ENCODE measurements at regions of chr1 and their contacts with region 1.

Region 1: DNA sequence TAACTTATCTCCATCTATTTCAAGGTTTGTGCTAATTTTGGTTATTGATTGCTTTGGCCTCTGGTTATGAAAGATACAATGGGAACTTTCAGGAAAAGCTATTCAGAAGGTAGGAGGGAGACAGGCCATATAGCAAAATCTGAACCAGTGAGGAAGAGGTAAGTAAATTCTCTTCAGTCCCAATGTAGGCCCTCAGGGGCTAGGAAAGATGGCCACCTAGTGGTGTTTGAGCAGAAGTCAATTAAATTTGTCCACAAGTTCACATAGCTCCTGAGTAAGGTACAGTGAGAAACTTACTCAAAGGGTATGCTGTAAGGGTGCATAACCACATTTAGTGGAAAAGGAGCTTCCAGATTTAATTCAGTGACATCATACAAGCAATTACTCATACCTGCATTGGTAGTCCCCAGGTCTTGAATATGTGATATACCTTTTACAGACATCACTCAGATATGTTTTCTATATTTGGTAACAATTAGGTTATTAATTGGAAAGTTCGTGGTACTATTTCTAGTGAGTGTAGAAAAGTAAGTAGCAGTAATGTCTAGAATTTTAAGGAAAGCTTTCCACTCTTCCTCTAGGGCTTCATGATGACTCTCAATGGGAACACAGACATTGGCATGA is 21.4 kb upstream of the FMO1 start:
- DNase-seq: peak; percentile 60
- H3K4me3 ChIP-seq: no peak overlapping the region
- H3K27ac ChIP-seq: no peak overlapping the region
- H3K4me1 ChIP-seq: no peaks in the 10 kb centered on the region
- H3K27me3 ChIP-seq: no peaks in the 10 kb centered on the region
- CTCF ChIP-seq: peak; percentile 63 to 74 (median 74)
- POLR2A ChIP-seq: no peak

Region 2: GRCh38 chr1:171081314-171081753 is 145.5 kb before region 1 on chr1:
- intact Hi-C with region 1: loop called (anchors 10 kb)
- DNase-seq: no peak
- H3K4me3 ChIP-seq: no peak overlapping the region
- H3K27ac ChIP-seq: peak overlapping the region; percentile 21 to 32
- H3K4me1 ChIP-seq: no peaks in the 10 kb centered on the region
- H3K27me3 ChIP-seq: no peaks in the 10 kb centered on the region
- CTCF ChIP-seq: peak; percentile 28 to 46 (median 41)
- POLR2A ChIP-seq: no peak

Measured in testis (tissue), 5 donors.